H1 (cell line): ENCODE measurements at regions of chr6 and their contacts with region 1.

Region 1: DNA sequence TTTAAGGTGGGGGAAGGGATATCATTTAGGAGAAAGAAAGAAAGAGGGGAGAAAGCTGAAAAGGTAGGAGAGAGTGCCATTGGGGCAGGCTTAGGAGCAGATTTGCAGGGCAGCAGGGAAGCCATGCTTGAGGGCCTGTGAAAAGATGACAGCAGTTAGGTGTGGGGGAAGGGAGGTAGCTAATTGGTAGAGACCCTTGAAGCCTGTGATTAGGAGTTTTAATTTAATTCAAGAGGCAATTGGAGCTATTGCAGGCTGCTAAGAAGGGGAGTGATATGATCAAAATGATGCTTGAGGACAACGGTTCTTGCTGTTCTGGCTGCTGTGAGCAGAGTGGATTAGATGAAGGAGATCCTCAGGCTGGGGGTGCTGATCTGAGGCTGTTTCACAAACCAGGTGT is 24.5 kb upstream of the SEC63 start:
- DNase-seq: no peak
- H3K4me3 ChIP-seq: no peak overlapping the region
- H3K27ac ChIP-seq: no peak overlapping the region
- H3K4me1 ChIP-seq: peaks cover 0 to 3% (median under 1%) of the 10 kb centered on the region in 4 experiments; a peak in 5 of 7 replicates
- H3K27me3 ChIP-seq: no peaks in the 10 kb centered on the region
- CTCF ChIP-seq: no peak
- EP300 ChIP-seq: no peak
- POLR2A ChIP-seq: no peak
- RAD21 ChIP-seq: no peak

Region 2: GRCh38 chr6:107964671-107965340 is 17.7 kb before region 1 on chr6:
- CTCF ChIA-PET with region 1: interaction called, 16 read pairs
- POLR2A ChIA-PET with region 1: no interaction called
- DNase-seq: no peak
- H3K4me3 ChIP-seq: no peak overlapping the region; a peak in 2 of 8 replicates
- H3K27ac ChIP-seq: no peak overlapping the region
- H3K4me1 ChIP-seq: peaks cover 0 to 12% (median 3%) of the 10 kb centered on the region in 4 experiments; a peak in 3 of 7 replicates
- H3K27me3 ChIP-seq: no peaks in the 10 kb centered on the region
- CTCF ChIP-seq: no peak
- EP300 ChIP-seq: no peak
- POLR2A ChIP-seq: no peak
- RAD21 ChIP-seq: no peak

Region 3: GRCh38 chr6:108027594-108027993 is 45.1 kb after region 1 on chr6:
- CTCF ChIA-PET with region 1: interaction called, 22 read pairs
- POLR2A ChIA-PET with region 1: no interaction called
- DNase-seq: no peak
- H3K4me3 ChIP-seq: no peak overlapping the region
- H3K27ac ChIP-seq: no peak overlapping the region
- H3K4me1 ChIP-seq: no peaks in the 10 kb centered on the region
- H3K27me3 ChIP-seq: no peaks in the 10 kb centered on the region
- CTCF ChIP-seq: no peak
- EP300 ChIP-seq: no peak
- POLR2A ChIP-seq: no peak
- RAD21 ChIP-seq: no peak

Region 4: DNA sequence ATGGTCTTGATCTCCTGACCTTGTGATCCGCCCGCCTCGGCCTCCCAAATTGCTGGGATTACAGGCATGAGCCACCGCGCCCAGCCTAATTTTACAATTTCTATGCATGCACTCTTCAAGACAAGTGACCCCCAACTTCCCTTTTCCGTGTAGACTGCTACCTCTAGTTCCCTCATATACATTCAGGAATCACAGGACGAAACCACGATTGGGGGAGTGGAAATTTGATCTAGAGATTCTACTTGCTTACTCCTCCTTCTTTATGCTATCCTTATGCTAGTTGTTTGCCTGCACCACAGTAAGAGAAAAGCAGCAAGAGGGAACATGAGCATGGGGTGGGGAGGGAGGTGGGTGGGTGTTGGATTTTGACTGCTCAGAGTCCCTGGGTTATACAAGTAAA is 57.2 kb after region 1 on chr6:
- CTCF ChIA-PET with region 1: interaction called, 42 read pairs
- POLR2A ChIA-PET with region 1: no interaction called
- DNase-seq: no peak
- H3K4me3 ChIP-seq: no peak overlapping the region
- H3K27ac ChIP-seq: no peak overlapping the region
- H3K4me1 ChIP-seq: peaks cover 0 to 4% (median 0%) of the 10 kb centered on the region in 4 experiments; a peak in 1 of 7 replicates
- H3K27me3 ChIP-seq: no peaks in the 10 kb centered on the region
- CTCF ChIP-seq: no peak
- EP300 ChIP-seq: no peak
- POLR2A ChIP-seq: no peak
- RAD21 ChIP-seq: no peak

Region 5: DNA sequence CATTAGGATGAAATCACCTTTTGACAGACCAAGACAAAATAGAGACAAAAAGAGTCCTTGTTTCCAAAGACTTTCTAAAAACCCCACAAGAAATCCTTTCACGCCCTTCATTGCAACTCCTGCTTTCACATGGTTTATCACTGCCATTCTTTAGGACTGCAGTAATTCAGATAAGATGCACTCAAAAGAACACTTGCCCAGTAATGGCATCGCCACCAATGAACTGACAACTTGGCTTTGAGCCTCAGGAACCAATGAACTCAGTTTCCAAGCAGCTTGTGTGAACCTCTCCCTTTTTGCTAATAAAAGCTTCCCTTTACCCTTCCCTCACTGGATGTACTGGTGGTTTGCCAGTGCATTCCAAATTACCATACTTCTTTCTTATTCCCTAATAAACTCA is 70.2 kb after region 1 on chr6:
- CTCF ChIA-PET with region 1: interaction called, 183 read pairs
- POLR2A ChIA-PET with region 1: interaction called, 8 read pairs
- DNase-seq: no peak
- H3K4me3 ChIP-seq: no peak overlapping the region
- H3K27ac ChIP-seq: no peak overlapping the region
- H3K4me1 ChIP-seq: no peaks in the 10 kb centered on the region
- H3K27me3 ChIP-seq: no peaks in the 10 kb centered on the region
- CTCF ChIP-seq: no peak
- EP300 ChIP-seq: no peak
- POLR2A ChIP-seq: no peak
- RAD21 ChIP-seq: no peak

Region 6: GRCh38 chr6:108179741-108180140 is 197.3 kb after region 1 on chr6:
- CTCF ChIA-PET with region 1: no interaction called
- POLR2A ChIA-PET with region 1: no interaction called
- DNase-seq: peak in 1 of 2 experiments; percentile 52
- H3K4me3 ChIP-seq: 0 out of 8 replicates have a peak overlapping the region, but pooled peaks of 1 of the 4 experiments have one; percentile 5
- H3K27ac ChIP-seq: no peak overlapping the region
- H3K4me1 ChIP-seq: peaks cover 0 to 20% (median 12%) of the 10 kb centered on the region in 4 experiments; a peak in 6 of 7 replicates
- H3K27me3 ChIP-seq: peaks cover 35 to 44% (median 41%) of the 10 kb centered on the region in 4 experiments
- CTCF ChIP-seq: no peak
- EP300 ChIP-seq: no peak
- POLR2A ChIP-seq: no peak
- RAD21 ChIP-seq: no peak; a peak in 1 of 4 replicates

Region 7: DNA sequence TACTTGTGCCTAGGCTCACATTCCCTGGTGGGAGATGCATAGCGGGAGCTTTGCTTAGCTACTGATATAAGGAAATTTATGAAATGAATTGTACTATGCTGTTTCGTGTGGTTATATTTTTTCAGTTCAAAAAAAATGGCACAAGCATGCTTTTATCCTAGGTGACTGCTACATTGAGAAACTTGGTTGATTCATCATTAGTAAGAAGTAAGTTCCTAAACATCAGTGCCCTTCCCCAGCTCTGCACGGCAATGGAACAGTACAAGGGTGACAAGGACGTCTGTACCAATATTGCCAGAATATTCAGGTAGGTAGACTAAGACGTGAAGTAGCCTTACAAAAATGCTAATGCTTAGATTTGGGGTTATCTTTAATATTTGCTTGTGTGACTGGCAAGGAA is 945.4 kb after region 1 on chr6:
- CTCF ChIA-PET with region 1: no interaction called
- POLR2A ChIA-PET with region 1: no interaction called
- DNase-seq: no peak
- H3K4me3 ChIP-seq: no peak overlapping the region
- H3K27ac ChIP-seq: no peak overlapping the region
- H3K4me1 ChIP-seq: peaks cover 0 to 6% (median under 1%) of the 10 kb centered on the region in 4 experiments; a peak in 4 of 7 replicates
- H3K27me3 ChIP-seq: no peaks in the 10 kb centered on the region
- CTCF ChIP-seq: no peak
- EP300 ChIP-seq: no peak
- POLR2A ChIP-seq: no peak
- RAD21 ChIP-seq: no peak